Left cardiac atrium (tissue), 4 donors: ENCODE measurements at regions of chr20 and their contacts with region 1.

Region 1: GRCh38 chr20:50189681-50190582 is 698 bp upstream of the CEBPB start:
- DNase-seq: peak; percentile 91
- ATAC-seq: peak; percentile 71 to 81

Region 2: DNA sequence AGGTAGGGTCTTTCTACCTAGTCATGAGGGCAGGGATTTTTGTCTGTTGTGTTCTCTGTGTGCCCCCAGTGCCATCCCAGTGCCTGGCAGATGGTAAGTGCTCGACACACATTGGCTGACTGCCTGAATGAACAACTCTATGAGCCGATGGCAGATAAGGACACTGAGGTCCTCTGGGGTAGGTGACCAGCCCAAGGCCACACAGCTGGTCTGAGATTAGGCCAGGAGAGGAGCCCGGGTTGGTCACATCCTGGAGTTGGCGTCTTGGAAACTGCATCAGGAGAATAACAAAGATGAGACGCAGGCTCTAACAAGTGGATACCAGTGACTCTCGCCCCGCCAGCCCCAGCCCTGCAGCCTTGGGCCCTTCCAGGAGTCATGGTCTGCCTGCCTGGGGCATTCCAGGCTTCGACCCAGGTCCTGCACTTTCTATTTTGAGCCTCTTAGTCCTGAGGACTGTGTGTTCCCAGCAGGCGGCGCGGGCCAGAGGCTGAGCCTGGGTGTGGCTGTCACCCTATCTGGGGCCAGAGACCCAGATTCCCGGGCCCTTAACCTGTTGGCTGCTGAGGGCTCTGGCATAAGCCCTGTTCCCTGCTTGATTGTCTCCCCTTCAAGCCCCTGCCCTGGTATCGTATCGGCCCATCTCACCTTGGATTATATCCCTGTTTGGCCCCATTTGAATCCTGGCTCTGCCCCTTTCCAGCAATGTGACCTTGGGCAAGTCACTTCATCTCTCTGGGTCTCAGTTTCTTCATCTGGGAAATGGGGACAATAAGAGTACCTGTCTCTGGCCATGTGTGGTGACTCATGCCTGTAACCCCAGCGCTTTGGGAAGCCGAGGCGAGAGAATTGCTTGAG is 89.0 kb after region 1 on chr20:
- intact Hi-C with region 1: loop called (anchors 5 to 10 kb)
- DNase-seq: peak; percentile 84
- ATAC-seq: peak; percentile 69 to 72

Region 3: DNA sequence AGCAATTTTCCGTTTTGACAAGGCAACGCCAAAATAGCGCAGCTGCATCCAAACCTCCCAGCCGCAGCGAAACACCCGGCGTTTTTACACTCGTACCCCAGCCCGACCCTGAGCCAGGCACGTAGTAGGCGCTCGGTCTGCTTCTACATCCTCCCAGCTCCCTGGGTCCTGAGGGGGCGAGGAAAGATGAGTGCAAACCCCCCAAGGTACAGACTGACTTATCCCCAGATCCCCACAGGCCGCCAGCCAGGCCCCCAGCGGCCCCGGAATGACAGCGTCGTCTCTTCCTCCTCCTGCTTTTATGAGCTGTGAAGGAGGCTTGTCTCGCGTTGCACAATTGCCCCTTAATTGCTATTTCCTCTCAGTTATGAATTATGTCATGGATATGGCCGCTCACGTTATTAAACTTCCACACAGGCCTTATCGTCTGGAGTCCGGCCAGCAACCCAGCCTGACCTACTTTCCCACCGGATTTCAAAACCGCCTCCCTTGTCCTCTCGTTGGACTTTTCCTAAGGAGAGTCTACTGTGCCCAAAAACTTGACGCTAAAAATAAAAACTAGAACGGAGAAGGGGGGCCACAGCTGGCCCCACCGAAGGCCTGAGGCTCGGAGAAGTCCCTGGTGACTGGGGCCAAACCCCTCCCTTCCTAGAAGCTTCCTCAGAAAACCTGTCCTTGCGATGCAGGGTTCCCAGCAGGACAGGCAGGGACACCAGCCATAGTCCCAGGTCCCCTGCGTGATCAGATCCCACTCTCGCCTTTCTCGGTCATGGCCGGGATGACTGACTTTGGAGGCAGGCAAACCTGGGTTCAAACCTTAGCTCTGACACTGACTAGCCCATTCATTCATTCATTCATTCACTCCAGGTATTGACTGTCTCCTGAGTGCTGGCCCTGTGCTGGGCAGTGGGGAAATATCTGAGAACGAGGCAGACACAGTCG is 189.4 kb after region 1 on chr20:
- intact Hi-C with region 1: loop called in 1 of 2 experiments (anchors 5 kb)
- DNase-seq: peak; percentile 94
- ATAC-seq: peak; percentile 83 to 88

Region 4: GRCh38 chr20:50460460-50461267 is 270.7 kb after region 1 on chr20:
- intact Hi-C with region 1: loop called (anchors 1 to 2 kb)
- DNase-seq: peak; percentile 92
- ATAC-seq: peak; percentile 85 to 86

Region 5: DNA sequence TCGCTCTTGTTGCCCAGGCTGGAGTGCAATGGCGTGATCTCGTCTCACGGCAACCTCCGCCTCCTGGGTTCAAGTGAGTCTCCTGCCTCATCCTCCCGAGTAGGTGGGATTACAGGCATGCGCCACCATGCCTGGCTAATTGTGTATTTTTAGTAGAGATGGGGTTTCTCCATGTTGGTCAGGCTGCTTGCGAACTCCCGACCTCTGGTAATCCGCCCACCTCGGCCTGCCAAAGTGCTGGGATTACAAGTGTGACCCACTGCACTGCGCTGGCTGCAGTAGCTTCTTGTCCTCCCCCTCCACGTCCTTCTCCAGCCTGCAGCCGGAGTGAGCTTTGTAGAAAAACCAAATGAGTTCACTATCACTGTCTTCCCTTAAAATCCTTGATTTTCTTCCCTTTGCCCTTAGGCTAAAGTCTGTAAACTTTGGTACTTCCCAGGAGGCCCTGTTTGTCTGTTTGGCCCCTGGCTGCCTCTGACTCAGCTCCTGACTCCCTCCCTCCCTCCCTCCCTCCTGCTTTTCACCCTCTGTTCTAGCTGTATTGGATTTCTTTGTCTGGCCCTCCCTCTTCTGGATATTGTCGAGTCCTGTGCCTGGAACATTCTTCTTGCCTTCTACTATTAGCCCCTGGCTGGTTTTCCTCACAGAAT is 554.3 kb after region 1 on chr20:
- intact Hi-C with region 1: loop called in 1 of 2 experiments (anchors 10 kb)
- DNase-seq: peak; percentile 38
- ATAC-seq: peak; percentile 93